ENCODE measurements at regions of chr22 and their contacts with region 1.

Region 1: DNA sequence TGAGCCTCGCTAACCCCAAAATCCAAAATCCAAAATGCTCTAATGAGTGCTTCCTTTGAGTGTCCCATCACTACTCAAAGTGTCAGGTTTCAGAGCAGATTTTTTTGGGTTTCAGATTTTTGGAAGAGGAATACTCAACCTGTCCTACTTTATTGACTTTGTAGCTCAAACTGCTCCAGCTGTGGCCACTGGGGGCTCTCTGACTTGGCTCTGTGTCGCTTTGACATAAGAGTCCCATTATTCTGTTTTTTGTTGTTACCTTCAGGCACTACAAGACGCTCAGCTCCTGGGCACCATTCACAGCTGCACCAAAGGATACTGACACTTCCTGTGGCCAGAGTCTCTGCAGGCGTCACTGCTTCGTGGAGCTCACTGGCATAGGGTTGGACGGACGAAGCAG is 41.1 kb downstream of the PHF21B start:
- DNase-seq: no peak
- H3K4me3 ChIP-seq: no peak overlapping the region
- H3K27ac ChIP-seq: no peak overlapping the region
- H3K4me1 ChIP-seq: peaks cover 0 to 39% (median 10%) of the 10 kb centered on the region in 4 experiments; a peak in 6 of 7 replicates
- H3K27me3 ChIP-seq: no peaks in the 10 kb centered on the region
- CTCF ChIP-seq: peak in 2 of 3 experiments; percentile 22 to 52; a peak in 2 of 4 replicates
- EP300 ChIP-seq: no peak
- POLR2A ChIP-seq: no peak
- RAD21 ChIP-seq: peak in 1 of 2 experiments; percentile 10; a peak in 1 of 4 replicates

Region 2: GRCh38 chr22:44889258-44889878 is 79.4 kb before region 1 on chr22:
- CTCF ChIA-PET with region 1: interaction called, 10 read pairs
- POLR2A ChIA-PET with region 1: no interaction called
- DNase-seq: no peak
- H3K4me3 ChIP-seq: no peak overlapping the region
- H3K27ac ChIP-seq: no peak overlapping the region
- H3K4me1 ChIP-seq: peaks cover 0 to 13% (median 9%) of the 10 kb centered on the region in 4 experiments; a peak in 5 of 7 replicates
- H3K27me3 ChIP-seq: no peaks in the 10 kb centered on the region; a peak in 1 of 7 replicates
- CTCF ChIP-seq: peak; percentile 24 to 58 (median 39); a peak in 3 of 4 replicates
- EP300 ChIP-seq: no peak
- POLR2A ChIP-seq: no peak
- RAD21 ChIP-seq: peak; percentile 52 to 67

Region 3: GRCh38 chr22:44944883-44945601 is 23.7 kb before region 1 on chr22:
- CTCF ChIA-PET with region 1: interaction called, 3 read pairs
- POLR2A ChIA-PET with region 1: interaction called, 11 read pairs
- DNase-seq: no peak
- H3K4me3 ChIP-seq: no peak overlapping the region
- H3K27ac ChIP-seq: no peak overlapping the region
- H3K4me1 ChIP-seq: peaks cover 0 to 38% (median 27%) of the 10 kb centered on the region in 4 experiments; a peak in 5 of 7 replicates
- H3K27me3 ChIP-seq: no peaks in the 10 kb centered on the region
- CTCF ChIP-seq: no peak
- EP300 ChIP-seq: no peak
- POLR2A ChIP-seq: no peak
- RAD21 ChIP-seq: no peak

Region 4: DNA sequence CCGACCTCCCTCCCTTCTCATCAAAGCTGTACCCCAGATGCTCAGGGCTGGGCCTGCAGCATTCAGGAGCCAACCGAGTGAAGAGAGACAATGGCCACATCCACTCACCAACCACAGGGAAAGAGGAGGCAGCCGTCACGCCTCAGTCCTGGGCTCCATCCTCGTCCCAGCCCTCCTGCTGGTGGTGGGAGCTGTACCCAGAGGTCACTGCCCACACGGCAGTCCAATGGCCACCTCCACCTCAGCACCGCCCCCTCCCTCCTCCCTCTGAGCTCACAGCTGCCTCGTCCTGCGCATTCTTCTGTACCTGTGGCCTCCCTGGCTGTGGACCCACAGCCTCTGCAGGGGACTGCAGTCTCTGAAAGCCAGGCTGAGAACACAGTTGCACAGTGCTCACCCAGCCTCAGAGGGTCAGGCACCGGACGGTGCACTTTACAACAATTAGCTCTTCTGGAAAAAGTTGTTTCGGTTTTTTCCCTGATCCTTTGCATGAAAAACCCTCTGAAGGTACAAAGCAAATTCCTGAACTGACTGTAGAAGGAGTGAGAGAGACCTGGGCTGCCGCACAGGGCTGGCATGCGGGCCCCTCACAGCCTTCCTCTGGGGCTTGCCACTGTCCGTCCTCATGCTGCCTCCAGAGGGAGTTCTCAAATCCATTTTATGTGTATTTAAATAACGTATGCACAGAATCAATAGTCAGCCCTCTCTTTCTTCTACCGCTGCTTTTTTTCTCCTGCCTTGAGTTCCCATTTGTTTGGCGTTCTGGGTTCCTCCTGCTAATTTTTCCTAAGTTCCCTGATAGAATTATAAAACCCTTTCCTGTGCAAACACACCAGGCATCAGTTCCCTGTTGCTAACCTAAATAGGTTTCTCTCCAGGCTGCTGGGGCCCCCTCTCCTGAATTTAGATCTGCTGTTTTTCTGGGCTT is 11.6 kb before region 1 on chr22:
- CTCF ChIA-PET with region 1: interaction called, 36 read pairs
- POLR2A ChIA-PET with region 1: interaction called, 37 read pairs
- DNase-seq: no peak
- H3K4me3 ChIP-seq: peak overlapping the region in 1 of 4 experiments; percentile 11; a peak in 1 of 8 replicates
- H3K27ac ChIP-seq: peak overlapping the region; percentile 30; the same call in 1 of the 2 replicates
- H3K4me1 ChIP-seq: peaks cover 3 to 53% (median 29%) of the 10 kb centered on the region in 4 experiments
- H3K27me3 ChIP-seq: no peaks in the 10 kb centered on the region
- CTCF ChIP-seq: peak in 2 of 3 experiments; percentile 45 to 52; a peak in 3 of 4 replicates
- EP300 ChIP-seq: no peak
- POLR2A ChIP-seq: no peak
- RAD21 ChIP-seq: peak in 1 of 2 experiments; percentile 10; a peak in 1 of 4 replicates